Psoas muscle (tissue), 8 donors: ENCODE measurements at regions of chr2 and their contacts with region 1.

Region 1: DNA sequence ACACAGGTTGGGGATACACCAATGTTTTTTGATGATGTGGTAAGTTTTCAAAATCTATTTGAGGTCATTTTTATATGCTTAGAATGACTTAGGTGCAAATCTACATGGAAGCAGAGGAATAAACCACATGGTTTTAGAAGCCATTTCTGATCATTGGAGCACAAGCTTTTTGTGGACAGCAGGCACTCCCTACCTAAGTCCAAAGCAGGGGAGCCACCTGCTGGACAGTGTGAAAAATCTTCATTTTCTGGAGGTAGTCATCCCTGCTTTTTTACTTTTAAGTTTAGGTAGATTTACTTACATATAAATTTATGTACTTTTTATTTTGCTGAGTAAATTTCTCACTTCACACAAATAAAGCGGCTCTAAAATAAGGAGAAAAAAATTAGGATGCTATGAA is 323.2 kb downstream of the PLCL1 start:
- DNase-seq: peak; percentile 30 to 61
- ATAC-seq: peak; percentile 82 to 97 (median 88)
- H3K4me3 ChIP-seq: no peak overlapping the region
- H3K27ac ChIP-seq: peak overlapping the region; percentile 58
- H3K4me1 ChIP-seq: peaks cover 8% of the 10 kb centered on the region
- H3K27me3 ChIP-seq: no peaks in the 10 kb centered on the region
- CTCF ChIP-seq: peak; percentile 83

Region 2: DNA sequence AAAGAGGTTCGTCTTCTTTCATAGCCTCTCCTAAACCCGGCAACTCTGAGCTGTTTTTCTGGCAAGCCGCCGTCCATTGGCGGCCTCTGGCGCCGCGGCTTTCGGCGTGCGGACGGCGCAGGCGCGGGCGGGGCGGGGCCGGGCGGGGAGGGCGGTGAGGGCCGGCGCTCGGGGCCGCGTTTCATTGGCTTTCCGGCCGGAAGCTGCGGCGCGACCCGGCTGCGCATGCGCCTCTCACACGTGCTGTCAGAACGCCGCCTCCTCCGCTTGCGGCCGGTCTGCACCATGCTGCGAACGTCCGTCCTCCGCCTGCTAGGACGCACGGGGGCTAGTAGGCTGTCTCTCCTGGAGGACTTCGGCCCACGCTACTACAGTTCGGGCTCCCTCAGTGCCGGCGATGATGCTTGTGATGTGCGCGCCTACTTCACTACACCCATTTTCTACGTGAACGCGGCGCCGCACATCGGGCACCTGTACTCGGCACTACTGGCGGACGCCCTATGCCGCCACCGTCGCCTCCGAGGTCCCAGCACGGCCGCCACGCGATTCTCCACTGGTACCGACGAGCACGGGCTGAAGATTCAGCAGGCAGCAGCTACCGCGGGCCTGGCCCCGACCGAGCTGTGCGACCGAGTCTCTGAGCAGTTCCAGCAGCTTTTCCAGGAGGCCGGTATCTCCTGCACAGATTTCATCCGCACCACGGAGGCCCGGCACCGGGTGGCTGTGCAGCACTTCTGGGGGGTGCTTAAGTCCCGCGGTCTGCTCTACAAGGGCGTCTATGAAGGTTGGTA is 422.3 kb before region 1 on chr2 and contains the start of gene MARS2:
- intact Hi-C with region 1: loop called (anchors 5 to 10 kb)
- DNase-seq: peak; percentile 96 to 97
- ATAC-seq: peak; percentile 94 to 98 (median 96)
- H3K4me3 ChIP-seq: peak within 1 kb of the TSS; percentile 97
- H3K27ac ChIP-seq: peak within 1 kb of the TSS; percentile 90
- H3K4me1 ChIP-seq: peaks cover 22% of the 10 kb centered on the region
- H3K27me3 ChIP-seq: no peaks in the 10 kb centered on the region
- CTCF ChIP-seq: no peak
- total RNA-seq, gene MARS2: 5.9 to 12.6 (median 7.3) TPM

Region 3: DNA sequence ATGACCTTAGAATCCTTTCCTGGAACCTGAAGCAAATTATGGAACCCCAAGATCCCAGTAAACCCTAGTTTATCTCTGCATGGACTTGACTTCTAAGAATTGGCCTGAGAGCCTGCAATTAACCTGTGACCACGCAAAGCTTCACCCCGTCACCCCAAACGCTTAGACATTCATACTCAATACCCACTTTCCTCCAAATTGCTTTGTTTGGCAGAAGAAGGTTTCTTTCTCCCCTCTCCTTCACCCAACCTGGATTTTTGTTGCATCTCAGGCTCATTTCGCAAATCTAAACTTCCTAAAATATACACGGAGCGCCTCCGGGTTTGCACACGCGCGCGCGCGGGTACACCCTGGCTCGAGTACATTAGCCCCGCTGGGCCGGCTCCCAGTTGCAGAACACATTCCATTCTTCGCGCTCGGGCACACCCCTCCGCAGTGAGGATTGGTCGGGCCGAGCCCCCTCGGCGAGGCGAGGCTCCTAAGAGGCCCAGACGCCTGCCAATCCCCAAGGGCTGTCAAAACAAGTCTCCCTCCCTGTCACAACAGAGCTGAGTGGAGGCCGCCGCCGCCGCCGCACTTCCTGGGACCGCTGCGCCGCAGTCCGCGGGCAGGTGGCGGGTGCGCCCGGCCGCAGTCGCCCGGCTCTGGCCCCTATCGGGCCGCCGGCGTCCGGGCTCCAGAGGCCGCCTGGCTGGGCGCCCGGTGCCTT is 323.4 kb before region 1 on chr2 and contains the start of gene PLCL1:
- intact Hi-C with region 1: loop called (anchors 1 kb)
- DNase-seq: peak; percentile 92 to 97
- ATAC-seq: peak; percentile 92 to 99 (median 96)
- H3K4me3 ChIP-seq: peak within 1 kb of the TSS; percentile 87
- H3K27ac ChIP-seq: peak within 1 kb of the TSS; percentile 82
- H3K4me1 ChIP-seq: peaks cover 45% of the 10 kb centered on the region
- H3K27me3 ChIP-seq: no peaks in the 10 kb centered on the region
- CTCF ChIP-seq: peak; percentile 6
- total RNA-seq, gene PLCL1: 9.6 to 25.4 (median 17.3) TPM

Region 4: GRCh38 chr2:198042189-198042588 is 85.4 kb before region 1 on chr2:
- intact Hi-C with region 1: no loop called
- DNase-seq: no peak
- ATAC-seq: no peak
- H3K4me3 ChIP-seq: no peak overlapping the region
- H3K27ac ChIP-seq: no peak overlapping the region
- H3K4me1 ChIP-seq: no peaks in the 10 kb centered on the region
- H3K27me3 ChIP-seq: no peaks in the 10 kb centered on the region
- CTCF ChIP-seq: no peak

Region 5: DNA sequence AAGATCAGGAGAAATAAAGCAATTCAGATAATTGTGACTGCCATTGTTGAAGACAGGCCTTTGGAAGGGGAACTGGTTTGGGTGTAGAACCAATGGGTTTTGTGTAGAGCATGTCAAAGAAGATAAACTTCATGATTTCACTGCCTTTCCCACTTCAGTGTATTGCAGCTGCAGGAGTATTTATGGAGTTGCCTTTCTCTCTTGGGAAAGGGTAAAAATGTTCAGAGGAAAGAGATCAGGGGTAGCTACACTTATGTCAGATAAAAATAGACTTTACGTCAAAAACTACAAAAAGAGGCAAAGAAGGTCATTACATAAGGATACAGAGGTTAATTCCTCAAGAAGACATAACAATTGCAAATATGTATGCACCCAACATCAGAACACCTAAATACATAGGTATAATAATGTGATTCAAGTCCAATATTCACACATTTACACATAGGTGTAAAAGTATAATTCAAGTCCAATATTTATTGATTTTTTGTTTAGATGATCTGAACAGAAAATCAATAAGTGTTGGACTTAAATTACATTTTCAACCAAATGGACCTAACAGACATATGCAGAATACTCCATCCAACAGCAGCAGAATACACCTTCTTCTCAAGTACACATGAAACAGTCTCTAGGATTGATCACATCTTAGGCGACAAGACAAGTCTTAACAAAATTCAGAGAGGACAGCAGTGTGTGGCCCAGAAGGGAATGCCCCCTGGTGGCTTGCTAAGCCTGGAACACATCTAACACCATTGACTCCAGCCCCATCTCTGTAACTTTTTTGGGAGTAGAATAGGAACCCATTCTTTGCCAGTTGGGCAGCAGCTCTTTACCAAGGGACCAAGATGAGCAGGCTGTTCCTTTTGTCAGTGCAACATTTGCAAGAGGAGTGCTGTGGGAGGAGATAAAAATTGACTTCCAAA is 73.6 kb before region 1 on chr2:
- intact Hi-C with region 1: loop called in 1 of 2 experiments (anchors 5 kb)
- DNase-seq: no peak
- ATAC-seq: peak; percentile 57 to 78 (median 68)
- H3K4me3 ChIP-seq: no peak overlapping the region
- H3K27ac ChIP-seq: peak overlapping the region; percentile 23
- H3K4me1 ChIP-seq: peaks cover 24% of the 10 kb centered on the region
- H3K27me3 ChIP-seq: no peaks in the 10 kb centered on the region
- CTCF ChIP-seq: peak; percentile 50